Right ventricle myocardium inferior (tissue), 1 donor: ENCODE measurements at regions of chr2 and their contacts with region 1.

Region 1: DNA sequence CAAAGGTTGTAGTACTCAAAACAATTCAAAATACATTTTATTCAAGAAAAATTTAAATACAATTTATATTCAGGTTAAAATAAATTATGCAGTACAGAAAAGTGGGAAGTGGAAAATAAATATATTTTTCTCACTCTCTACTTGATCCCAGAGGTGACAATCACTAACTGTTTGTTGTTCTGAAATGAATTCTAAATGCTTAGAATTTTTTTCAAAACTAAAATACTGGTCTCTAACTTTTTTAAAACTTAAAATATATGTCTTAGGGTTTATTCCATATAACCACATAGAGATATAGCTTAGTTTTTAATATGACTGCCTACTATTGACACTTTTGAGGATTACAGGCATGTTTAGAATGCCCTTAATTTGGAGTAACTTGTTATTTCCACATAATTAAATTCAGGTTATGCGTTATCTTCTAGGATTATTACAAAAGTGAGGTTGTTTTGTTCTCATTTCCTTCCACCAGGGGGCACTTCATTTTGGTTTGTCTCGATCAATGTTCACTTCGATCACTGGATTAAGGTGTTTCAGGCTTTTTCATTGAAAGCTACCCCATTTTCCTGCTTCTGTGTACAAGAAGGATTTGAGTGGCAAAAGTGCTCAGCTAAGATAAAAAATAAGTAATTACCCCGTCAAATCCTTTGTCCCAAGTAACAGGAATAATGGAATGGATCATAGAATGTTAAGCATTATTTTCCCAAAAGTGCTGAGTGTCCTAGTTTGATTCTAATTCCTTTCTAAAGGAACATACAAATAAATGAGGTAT is 27.1 kb upstream of the TFPI start:
- DNase-seq: no peak
- ATAC-seq: peak; percentile 50

Region 2: GRCh38 chr2:186862869-186863709 is 718.2 kb before region 1 on chr2:
- intact Hi-C with region 1: loop called (anchors 10 kb)
- DNase-seq: no peak
- ATAC-seq: peak; percentile 37

Region 3: DNA sequence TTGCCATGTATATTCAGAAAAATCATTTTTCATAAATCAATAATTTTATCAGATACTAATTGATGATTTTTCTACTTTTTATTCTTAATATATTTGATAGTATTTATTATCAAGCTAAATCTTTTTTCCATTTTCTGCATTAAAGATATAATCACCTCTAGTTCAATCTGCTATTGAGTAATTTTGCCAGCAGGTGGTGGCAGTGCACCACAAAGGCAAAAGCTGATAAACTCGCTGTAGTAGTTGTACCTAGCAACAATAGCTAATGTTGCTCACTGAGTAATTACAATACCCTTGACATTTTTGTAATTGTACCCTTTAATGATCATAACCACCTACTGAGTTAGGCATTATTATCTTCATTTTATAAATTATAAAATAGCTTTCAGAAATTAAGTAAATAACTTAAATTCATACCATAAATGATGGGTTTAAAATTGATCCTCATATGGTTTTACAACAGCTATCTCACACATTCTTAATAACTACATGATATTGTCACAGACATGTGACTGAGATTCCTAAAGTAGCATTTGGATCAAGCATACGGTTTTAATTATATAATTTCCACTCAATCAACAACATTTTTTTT is 81.3 kb before region 1 on chr2:
- intact Hi-C with region 1: loop called (anchors 1 kb)
- DNase-seq: no peak
- ATAC-seq: peak; percentile 63

Region 4: DNA sequence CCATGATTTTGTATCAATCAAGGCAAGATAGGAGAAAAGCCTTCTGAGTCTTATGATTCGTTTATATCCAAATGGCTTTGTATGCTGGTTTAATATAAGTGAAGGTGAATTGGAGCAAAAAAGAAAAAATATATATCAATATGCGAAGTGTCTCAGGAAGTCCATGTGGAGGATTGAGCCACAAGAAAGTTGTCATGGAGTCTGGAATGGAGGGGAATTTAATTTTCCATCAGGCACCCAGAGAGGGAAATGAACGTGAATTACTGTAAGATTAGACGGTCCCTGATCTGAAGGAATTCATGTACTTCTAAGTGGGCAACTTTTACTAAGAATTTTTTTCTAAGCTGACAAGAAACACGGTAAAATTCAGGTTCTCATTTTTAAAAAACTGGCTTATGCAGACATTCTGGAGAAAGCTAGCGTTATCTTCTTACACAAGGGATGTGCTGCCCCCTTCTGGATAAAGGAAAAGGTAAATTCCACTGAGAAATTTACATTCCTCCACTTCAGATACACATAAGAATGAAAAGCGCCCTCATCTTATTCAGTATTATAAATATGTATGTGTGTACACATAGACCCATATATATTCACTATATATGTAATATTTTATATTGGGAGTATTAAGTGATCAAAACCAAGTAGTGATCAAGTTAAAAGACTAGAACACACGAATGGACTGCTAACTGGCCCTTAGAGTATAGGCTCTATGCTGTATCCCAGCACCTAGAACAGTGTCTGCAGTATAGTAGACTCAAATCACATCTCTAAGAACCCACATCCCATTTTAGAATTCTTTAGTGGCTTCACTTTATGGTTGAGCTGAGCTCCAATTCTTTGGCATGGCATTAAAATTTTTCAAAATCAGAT is 261.9 kb after region 1 on chr2:
- intact Hi-C with region 1: loop called (anchors 10 kb)
- DNase-seq: no peak
- ATAC-seq: no peak

Region 5: GRCh38 chr2:188506843-188507242 is 925.5 kb after region 1 on chr2:
- intact Hi-C with region 1: loop called (anchors 5 kb)
- DNase-seq: no peak
- ATAC-seq: no peak